Activated T-helper 1 cell treated with anti-CD3 and anti-CD28 coated beads, Interleukin-12 subunit alpha, Interleukin-12 subunit beta, Interleukin-2, Interleukin-4 antibody, amounts not matched to agents 30 ng/mL and 10 ng/mL and 1 ng/mL, durations not matched to agents 14 hours and 24 hours and 36 hours (primary cell): ENCODE measurements at regions of chr2 and their contacts with region 1.

Region 1: DNA sequence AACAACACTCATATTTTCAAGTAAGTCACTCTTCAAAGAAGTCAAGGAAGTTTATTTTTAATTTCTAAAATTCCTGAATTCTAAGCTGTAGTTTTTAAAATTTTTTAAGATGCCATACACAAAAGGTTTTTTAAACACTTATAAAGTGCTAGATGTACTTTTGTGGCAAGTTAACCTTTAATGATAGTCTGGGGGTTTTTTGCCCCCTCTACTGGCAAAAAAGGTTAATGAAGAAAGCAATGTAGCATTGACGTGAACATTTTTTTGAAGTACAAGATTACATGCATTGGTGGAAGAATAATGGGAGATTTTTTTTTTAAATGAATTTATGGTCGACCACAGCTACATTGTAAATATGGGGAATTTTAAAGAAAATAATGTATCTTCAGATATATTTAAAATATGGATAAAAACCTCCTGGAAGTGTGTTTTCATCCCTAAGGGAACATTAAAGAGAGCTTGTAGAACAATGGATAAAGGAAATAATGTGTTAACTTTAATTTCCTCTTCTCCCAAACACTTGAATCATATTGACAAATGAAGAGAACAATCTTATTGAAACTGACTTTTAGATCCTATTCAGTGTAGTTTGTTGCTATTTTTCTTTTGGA is 12.6 kb downstream of the ITPRID2 start:
- DNase-seq: no peak
- H3K4me3 Mint-ChIP-seq: no peak overlapping the region
- H3K27ac Mint-ChIP-seq: no peak overlapping the region
- H3K4me1 Mint-ChIP-seq: peaks cover 21% of the 10 kb centered on the region
- H3K27me3 Mint-ChIP-seq: no peaks in the 10 kb centered on the region

Region 2: GRCh38 chr2:181946498-181947127 is 42.5 kb after region 1 on chr2:
- intact Hi-C with region 1: loop called (anchors 1 kb)
- DNase-seq: no peak
- H3K4me3 Mint-ChIP-seq: no peak overlapping the region
- H3K27ac Mint-ChIP-seq: no peak overlapping the region
- H3K4me1 Mint-ChIP-seq: no peaks in the 10 kb centered on the region
- H3K27me3 Mint-ChIP-seq: peaks cover 29% of the 10 kb centered on the region

Region 3: DNA sequence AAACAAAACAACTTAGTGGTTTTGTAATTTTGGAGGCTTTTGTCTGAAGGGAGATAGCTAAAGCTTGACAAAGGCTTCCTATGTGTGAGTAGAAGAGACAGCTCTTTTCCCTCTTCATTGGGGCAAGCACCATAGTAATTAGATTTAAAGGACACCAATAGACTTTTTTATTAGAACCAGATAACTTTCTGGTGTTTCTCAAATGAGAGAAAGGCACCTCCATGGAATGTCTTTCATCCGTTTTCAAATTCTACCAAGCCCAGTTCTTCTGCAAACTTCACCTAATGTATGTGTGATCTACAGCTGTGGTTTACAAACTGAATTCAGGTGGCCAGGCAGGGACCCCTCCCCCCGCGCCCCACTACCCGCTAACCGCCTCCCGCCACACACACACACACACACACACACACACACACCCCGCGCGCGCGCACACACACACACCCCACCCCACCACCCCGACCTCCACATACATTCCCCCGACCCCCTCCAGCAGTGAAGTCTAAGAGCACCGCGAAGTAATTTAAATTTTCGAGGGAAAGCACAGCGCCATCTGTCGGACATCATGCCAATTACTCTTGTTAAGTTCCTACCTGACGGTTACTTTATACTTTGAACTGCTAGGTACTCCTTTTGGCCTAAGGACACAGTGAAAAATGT is 49.9 kb after region 1 on chr2:
- intact Hi-C with region 1: loop called (anchors 2 kb)
- DNase-seq: peak; percentile 38
- H3K4me3 Mint-ChIP-seq: peak overlapping the region; percentile 47
- H3K27ac Mint-ChIP-seq: no peak overlapping the region
- H3K4me1 Mint-ChIP-seq: peaks cover 21% of the 10 kb centered on the region
- H3K27me3 Mint-ChIP-seq: peaks cover 24% of the 10 kb centered on the region

Region 4: GRCh38 chr2:181977661-181978350 is 73.7 kb after region 1 on chr2:
- intact Hi-C with region 1: no loop called
- DNase-seq: no peak
- H3K4me3 Mint-ChIP-seq: no peak overlapping the region
- H3K27ac Mint-ChIP-seq: no peak overlapping the region
- H3K4me1 Mint-ChIP-seq: no peaks in the 10 kb centered on the region
- H3K27me3 Mint-ChIP-seq: no peaks in the 10 kb centered on the region